GM13976 (cell line): ENCODE measurements at regions of chr9 and their contacts with region 1.

Region 1: GRCh38 chr9:27276193-27277030 is 20.5 kb downstream of the EQTN start:
- DNase-seq: peak; percentile 55
- CTCF ChIP-seq: peak; percentile 59

Region 2: GRCh38 chr9:26946753-26947727 is 329.4 kb before region 1 on chr9 and contains the start of gene PLAA:
- in situ Hi-C with region 1: no loop called
- DNase-seq: peak; percentile 95
- CTCF ChIP-seq: no peak

Region 3: GRCh38 chr9:27033823-27034403 is 242.5 kb before region 1 on chr9:
- in situ Hi-C with region 1: loop called (anchors 25 kb)
- DNase-seq: peak; percentile 61
- CTCF ChIP-seq: peak; percentile 59